ENCODE measurements at regions of chr1 and their contacts with region 1.

Region 1: GRCh38 chr1:69737527-69738185 is 169.9 kb downstream of the LRRC7 start:
- DNase-seq: peak in 1 of 5 donors; percentile 13
- ATAC-seq: peak; percentile 47 to 73 (median 60)
- H3K4me3 ChIP-seq: no peak overlapping the region
- H3K27ac ChIP-seq: no peak overlapping the region
- H3K4me1 ChIP-seq: no peaks in the 10 kb centered on the region
- H3K27me3 ChIP-seq: no peaks in the 10 kb centered on the region
- CTCF ChIP-seq: peak; percentile 42 to 71 (median 62)
- POLR2A ChIP-seq: no peak

Region 2: GRCh38 chr1:68470388-68470970 is 1267.2 kb before region 1 on chr1:
- intact Hi-C with region 1: loop called in 3 of 10 experiments (anchors 5 to 10 kb)
- DNase-seq: no peak
- ATAC-seq: no peak
- H3K4me3 ChIP-seq: no peak overlapping the region
- H3K27ac ChIP-seq: no peak overlapping the region
- H3K4me1 ChIP-seq: no peaks in the 10 kb centered on the region
- H3K27me3 ChIP-seq: no peaks in the 10 kb centered on the region
- CTCF ChIP-seq: peak; percentile 25 to 74 (median 52)
- POLR2A ChIP-seq: no peak

Region 3: DNA sequence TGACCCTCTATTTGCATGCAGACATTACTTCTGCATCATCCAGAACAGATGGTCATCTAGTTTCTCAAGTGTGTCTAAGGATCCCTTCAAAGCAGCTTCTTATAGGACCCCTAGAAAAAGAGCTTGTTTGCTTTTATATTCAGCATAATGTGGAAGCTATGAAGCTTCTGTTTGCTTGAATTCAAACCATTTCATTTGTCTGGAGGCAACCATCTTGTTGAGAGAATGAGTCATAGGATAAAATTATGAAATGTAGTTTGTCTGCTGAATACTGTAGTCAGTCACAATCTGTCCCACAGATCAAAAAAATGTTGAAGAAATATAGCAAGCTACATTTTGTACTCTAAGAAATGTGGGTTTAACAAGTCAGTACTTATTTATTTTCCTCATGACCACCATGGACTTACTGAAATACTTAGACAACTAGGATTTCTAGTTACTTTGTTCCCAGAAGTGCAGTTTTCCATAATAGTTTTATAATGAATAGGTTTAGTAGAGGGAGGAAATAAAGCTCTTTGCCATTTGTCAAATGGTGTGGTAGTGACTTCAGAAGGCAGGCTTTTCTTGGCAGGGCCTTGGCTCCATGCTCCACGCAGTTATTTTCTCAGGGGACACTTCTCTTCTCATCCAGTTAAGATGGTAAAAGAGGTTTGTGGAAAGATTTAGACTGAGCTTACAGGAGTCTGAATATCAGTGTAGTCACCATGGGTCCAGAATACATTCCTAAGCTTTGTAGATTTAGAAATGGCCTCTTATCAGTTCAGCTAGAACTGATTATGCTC is 1166.0 kb before region 1 on chr1:
- intact Hi-C with region 1: loop called in 5 of 10 experiments (anchors 5 to 10 kb)
- DNase-seq: no peak
- ATAC-seq: peak in 1 of 4 donors; percentile 59
- H3K4me3 ChIP-seq: no peak overlapping the region
- H3K27ac ChIP-seq: no peak overlapping the region
- H3K4me1 ChIP-seq: peaks cover 0 to 6% (median 0%) of the 10 kb centered on the region in 12 donors
- H3K27me3 ChIP-seq: no peaks in the 10 kb centered on the region
- CTCF ChIP-seq: no peak
- POLR2A ChIP-seq: no peak

Region 4: GRCh38 chr1:68600049-68600661 is 1137.5 kb before region 1 on chr1:
- intact Hi-C with region 1: loop called in 3 of 10 experiments (anchors 10 kb)
- DNase-seq: no peak
- ATAC-seq: peak in 1 of 4 donors; percentile 26
- H3K4me3 ChIP-seq: peak overlapping the region in 1 of 12 donors; percentile 28
- H3K27ac ChIP-seq: no peak overlapping the region
- H3K4me1 ChIP-seq: peaks cover 0 to 3% (median 0%) of the 10 kb centered on the region in 12 donors
- H3K27me3 ChIP-seq: no peaks in the 10 kb centered on the region
- CTCF ChIP-seq: peak; percentile 27 to 66 (median 54)
- POLR2A ChIP-seq: no peak

Region 5: GRCh38 chr1:69451196-69451595 is 286.5 kb before region 1 on chr1:
- intact Hi-C with region 1: no loop called
- DNase-seq: no peak
- ATAC-seq: no peak
- H3K4me3 ChIP-seq: no peak overlapping the region
- H3K27ac ChIP-seq: no peak overlapping the region
- H3K4me1 ChIP-seq: no peaks in the 10 kb centered on the region
- H3K27me3 ChIP-seq: no peaks in the 10 kb centered on the region
- CTCF ChIP-seq: no peak
- POLR2A ChIP-seq: no peak

Region 6: GRCh38 chr1:69862906-69863305 is 125.2 kb after region 1 on chr1:
- intact Hi-C with region 1: no loop called
- DNase-seq: no peak
- ATAC-seq: no peak
- H3K4me3 ChIP-seq: no peak overlapping the region
- H3K27ac ChIP-seq: no peak overlapping the region
- H3K4me1 ChIP-seq: no peaks in the 10 kb centered on the region
- H3K27me3 ChIP-seq: no peaks in the 10 kb centered on the region
- CTCF ChIP-seq: no peak
- POLR2A ChIP-seq: no peak

Measured in heart left ventricle (tissue), 16 donors.